ENCODE measurements at regions of chr11 and their contacts with region 1.

Region 1: GRCh38 chr11:48020092-48020755 is 39.9 kb downstream of the PTPRJ start:
- H3K4me3 Mint-ChIP-seq: peak overlapping the region; percentile 47
- H3K27ac Mint-ChIP-seq: peak overlapping the region; percentile 94
- H3K4me1 Mint-ChIP-seq: peaks cover 94% of the 10 kb centered on the region
- H3K27me3 Mint-ChIP-seq: no peaks in the 10 kb centered on the region

Region 2: DNA sequence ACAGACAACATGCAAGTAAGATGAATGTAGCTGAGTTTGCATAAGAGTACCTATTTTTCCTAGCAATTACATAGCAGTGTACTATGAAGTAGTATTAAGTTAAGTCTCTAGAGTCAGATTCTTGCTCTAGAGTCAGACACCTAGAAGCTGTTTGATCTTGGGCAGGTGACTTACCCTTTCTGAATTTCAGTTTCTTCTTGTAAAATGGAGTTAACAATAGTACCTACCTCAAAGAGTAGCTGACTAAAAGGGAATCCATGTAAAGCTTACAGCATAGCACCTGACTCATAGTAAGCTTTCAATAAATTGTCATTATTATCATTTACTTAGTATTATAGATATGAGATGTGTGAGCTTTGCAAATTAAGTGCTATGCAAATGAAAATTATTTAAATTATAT is 87.7 kb before region 1 on chr11:
- intact Hi-C with region 1: loop called (anchors 10 kb)
- H3K4me3 Mint-ChIP-seq: no peak overlapping the region
- H3K27ac Mint-ChIP-seq: no peak overlapping the region
- H3K4me1 Mint-ChIP-seq: peaks cover 35% of the 10 kb centered on the region
- H3K27me3 Mint-ChIP-seq: no peaks in the 10 kb centered on the region

Region 3: DNA sequence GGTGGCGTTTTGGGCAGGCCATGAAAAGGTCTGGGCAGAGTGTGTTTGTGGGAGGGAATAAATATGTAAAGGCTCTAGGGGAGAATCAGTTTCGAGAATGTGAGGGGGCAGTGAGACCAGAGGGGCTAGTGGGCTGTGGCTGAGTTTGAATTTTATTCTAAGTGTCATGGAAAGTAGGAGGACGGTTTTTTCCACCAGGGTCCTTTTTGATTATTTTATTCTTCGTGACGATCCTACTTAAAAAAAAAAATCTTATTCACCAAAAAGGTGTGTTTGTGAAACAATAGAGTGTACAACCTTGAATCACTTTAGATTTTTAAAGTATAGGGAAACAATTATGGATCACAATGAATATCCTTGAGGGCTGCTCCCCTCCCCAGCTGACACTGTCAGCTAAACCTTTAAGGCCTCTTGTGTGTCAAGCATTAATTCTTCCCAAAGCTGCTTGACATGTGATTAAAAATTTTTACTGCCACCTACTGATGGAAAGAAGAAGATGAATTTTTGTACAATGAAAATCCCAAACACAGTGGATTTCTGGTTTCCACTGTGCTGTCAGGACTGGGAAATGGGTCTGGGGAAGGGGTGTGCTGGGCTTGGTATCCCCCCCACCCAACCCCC is 88.9 kb after region 1 on chr11:
- intact Hi-C with region 1: no loop called
- H3K4me3 Mint-ChIP-seq: no peak overlapping the region
- H3K27ac Mint-ChIP-seq: peak overlapping the region; percentile 82
- H3K4me1 Mint-ChIP-seq: peaks cover 71% of the 10 kb centered on the region
- H3K27me3 Mint-ChIP-seq: no peaks in the 10 kb centered on the region

Measured in dendritic cell treated with granulocyte-macrophage colony-stimulating factor and Interleukin-4, amounts not matched to agents 40 ng/mL and 50 ng/mL, for 4 days (primary cell).